Activated CD4-positive, alpha-beta T cell treated with anti-CD3 and anti-CD28 coated beads, Interleukin-2, amount 10 ng/mL, durations not matched to agents 24 days and 14 days (primary cell): ENCODE measurements at regions of chr5 and their contacts with region 1.

Region 1: DNA sequence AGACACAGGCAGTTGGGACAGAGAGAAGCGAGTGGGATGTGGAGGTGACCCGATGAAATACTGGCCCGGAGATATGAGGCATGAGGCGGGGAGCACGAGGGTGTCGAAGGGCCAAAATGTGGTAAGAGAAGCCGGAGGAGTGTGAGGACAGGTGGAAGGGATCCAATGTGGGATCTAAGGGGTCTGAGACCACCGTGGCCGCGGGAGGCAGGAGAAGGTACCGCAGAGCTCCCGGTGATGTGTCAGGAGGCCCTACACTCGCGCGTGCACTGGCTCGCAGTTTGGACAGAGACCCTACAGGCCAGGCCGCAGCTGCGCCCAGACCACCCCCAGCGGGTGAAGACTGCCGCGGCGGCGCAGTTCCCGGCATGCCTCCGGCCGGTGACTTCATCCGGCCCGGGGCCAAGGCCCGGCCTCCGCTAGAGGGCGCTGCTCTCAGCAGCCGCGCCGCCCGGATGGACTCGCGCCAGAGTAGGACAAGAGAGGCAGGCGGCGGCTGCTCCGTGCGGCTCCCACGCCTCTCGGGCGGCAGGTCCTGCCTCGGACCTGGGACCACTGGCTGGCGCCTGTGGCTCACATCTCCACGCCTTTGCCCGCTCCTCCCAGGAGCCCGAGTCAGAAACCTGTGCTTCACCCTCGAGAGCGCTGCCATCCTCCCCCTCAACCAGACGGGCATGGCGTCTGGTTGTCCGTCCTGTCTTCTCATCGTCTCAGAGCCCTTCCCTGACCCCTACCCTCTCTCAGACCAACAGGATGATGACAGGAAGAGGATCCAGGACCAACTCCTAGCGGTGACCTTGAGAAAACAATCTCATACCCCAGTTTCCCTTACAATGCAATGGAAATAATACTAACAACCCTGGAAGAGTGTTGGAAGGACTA is 35.4 kb upstream of the STING1 start:
- DNase-seq: peak; percentile 98
- H3K4me3 Mint-ChIP-seq: peak overlapping the region; percentile 83
- H3K27ac Mint-ChIP-seq: peak overlapping the region; percentile 93
- H3K4me1 Mint-ChIP-seq: peaks cover 28% of the 10 kb centered on the region
- H3K27me3 Mint-ChIP-seq: no peaks in the 10 kb centered on the region

Region 2: GRCh38 chr5:139415221-139415861 is 102.6 kb before region 1 on chr5:
- intact Hi-C with region 1: loop called (anchors 2 kb)
- DNase-seq: peak; percentile 81
- H3K4me3 Mint-ChIP-seq: peak overlapping the region; percentile 64
- H3K27ac Mint-ChIP-seq: peak overlapping the region; percentile 95
- H3K4me1 Mint-ChIP-seq: peaks cover 60% of the 10 kb centered on the region
- H3K27me3 Mint-ChIP-seq: no peaks in the 10 kb centered on the region

Region 3: DNA sequence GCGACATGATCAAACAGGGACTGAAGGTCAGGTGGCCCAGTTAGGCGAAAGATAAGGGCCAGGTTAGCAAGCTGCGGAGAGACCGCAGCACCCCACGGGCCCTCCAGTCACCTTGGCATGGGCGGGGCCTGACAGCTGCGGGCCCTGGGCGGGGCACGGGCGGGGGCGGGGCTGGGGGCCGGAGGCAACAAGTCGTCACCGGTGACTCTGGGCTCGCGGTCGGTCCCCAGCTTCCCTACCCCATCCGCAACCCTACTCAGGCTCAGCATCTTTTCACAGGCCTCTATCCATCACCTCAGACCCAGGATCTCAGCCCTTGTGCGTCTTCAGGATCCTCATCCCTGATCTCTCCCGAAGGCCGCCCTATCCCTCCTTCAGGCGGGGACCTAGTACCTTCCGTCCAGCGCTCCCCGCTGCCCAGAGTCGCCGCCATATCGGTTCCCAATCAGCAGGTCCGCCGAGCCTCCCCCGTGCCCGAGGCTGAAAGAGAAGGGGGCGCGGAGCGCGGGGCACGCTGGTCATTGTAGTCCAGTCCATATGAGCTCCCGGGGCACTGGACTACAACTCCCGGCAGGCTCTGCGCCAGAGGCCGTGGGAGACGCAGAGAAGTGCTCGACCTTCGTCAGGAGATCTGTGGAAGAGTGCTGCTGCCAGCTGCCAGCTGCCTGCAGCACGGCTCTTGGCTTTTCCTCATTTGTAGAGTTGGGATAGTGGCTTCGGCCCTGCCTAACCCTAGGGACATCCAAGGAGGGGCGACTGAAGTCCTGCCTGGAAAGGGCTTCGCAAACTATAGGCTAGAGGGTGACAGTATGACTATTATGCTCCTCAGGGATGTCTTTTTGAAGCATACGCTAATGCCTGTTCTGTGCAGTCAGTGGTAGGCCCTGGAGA is 78.7 kb before region 1 on chr5 and contains the start of gene DNAJC18:
- intact Hi-C with region 1: loop called (anchors 5 kb)
- DNase-seq: peak; percentile 97
- H3K4me3 Mint-ChIP-seq: peak within 1 kb of the TSS; percentile 97
- H3K27ac Mint-ChIP-seq: peak within 1 kb of the TSS; percentile 99
- H3K4me1 Mint-ChIP-seq: peaks cover 55% of the 10 kb centered on the region
- H3K27me3 Mint-ChIP-seq: no peaks in the 10 kb centered on the region
- total RNA-seq, gene DNAJC18: 34.2 and 38.6 TPM in 2 replicates

Region 4: DNA sequence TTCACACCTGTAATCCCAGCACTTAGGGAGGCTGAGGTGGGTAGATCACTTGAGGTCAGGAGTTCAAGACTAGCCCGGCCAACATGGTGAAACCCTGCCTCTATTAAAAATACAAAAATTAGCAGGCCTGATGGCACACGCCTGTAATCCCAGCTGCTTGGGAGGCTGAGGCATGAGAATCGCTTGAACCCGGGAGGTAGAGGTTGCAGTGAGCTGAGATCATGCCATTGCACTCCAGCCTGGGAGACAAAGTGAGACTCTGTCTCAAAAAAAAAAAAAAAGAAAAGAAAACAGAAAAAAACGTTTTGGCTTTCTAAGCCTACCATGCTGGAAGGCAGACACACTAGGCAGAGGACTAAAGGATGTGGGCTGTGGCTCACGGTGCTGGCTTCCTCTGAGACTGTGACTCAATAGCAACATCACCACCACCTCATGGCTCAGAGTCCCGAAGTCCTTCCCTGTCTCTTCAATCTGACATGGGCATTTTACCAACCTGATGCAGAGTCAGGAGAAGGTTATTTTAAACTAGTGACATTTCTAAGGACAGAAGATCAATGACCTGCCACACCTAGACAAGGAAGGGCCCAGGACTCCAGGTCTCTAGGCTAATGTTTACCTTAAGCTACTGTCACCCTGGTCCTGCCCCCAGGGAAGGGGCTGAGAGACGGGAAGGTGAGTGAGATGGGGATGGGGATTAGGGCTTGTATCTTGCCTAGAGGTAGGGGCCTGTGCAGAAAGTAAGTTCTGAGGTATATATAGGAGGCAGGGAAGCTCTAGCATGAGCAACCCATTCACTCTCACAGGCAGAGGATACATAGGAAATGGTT is 59.1 kb before region 1 on chr5:
- intact Hi-C with region 1: loop called (anchors 2 kb)
- DNase-seq: peak; percentile 93
- H3K4me3 Mint-ChIP-seq: peak overlapping the region; percentile 75
- H3K27ac Mint-ChIP-seq: peak overlapping the region; percentile 94
- H3K4me1 Mint-ChIP-seq: peaks cover 57% of the 10 kb centered on the region
- H3K27me3 Mint-ChIP-seq: peaks cover under 1% of the 10 kb centered on the region

Region 5: DNA sequence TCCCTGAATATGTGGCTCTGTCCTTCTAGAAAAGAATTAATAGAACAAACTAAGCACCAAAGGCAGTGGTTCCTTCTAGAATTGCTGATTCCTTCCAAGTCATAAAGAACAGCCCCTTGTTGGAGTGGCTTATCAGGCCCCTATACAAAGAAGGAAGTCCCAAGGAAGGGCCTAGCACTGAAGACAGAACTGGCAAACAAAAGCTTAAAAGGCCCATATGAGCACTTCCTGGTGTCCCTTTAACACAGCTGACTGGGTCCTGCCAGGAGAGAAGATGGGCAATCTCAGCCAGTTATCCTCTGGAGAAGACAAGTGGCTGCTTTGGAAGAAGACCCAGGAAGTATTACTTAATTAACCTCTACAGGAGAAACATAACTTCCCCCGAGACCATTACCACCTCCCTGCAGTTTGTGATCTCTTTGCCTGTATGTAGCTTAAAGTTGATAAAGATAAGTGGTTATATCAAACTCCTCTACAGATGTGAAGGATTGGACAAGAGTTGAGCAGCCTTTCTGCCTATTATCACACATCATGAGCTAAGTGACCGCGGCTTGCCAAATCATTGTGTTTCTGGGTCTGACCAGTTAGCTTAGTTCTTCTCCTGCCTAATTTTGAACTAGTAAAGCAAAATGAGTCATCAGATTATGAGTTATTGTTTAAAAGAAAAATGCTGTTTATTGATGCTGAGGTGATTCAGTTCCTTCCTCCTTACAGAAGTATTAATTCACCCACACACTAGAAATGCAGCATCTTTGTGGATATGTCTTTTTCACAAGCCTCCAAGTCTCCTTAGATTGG is 22.1 kb before region 1 on chr5:
- intact Hi-C with region 1: loop called (anchors 2 kb)
- DNase-seq: no peak
- H3K4me3 Mint-ChIP-seq: no peak overlapping the region
- H3K27ac Mint-ChIP-seq: peak overlapping the region; percentile 85
- H3K4me1 Mint-ChIP-seq: peaks cover 20% of the 10 kb centered on the region
- H3K27me3 Mint-ChIP-seq: no peaks in the 10 kb centered on the region